B cell (primary cell): ENCODE measurements at regions of chr3 and their contacts with region 1.

Region 1: GRCh38 chr3:36957862-36958686 is 13.2 kb upstream of the TRANK1 start:
- DNase-seq: no peak
- ATAC-seq: no peak
- H3K4me3 ChIP-seq: no peak overlapping the region
- H3K4me3 Mint-ChIP-seq: no peak overlapping the region
- H3K27ac ChIP-seq: no peak overlapping the region
- H3K27ac Mint-ChIP-seq: peak overlapping the region; percentile 51
- H3K4me1 ChIP-seq: peaks cover 0 to 4% of the 10 kb centered on the region in 2 donors
- H3K4me1 Mint-ChIP-seq: peaks cover 13% of the 10 kb centered on the region
- H3K27me3 ChIP-seq: no peaks in the 10 kb centered on the region
- H3K27me3 Mint-ChIP-seq: no peaks in the 10 kb centered on the region
- CTCF ChIP-seq: no peak

Region 2: GRCh38 chr3:36700537-36701248 is 257.4 kb before region 1 on chr3:
- CTCF ChIA-PET with region 1: no interaction called
- POLR2A ChIA-PET with region 1: no interaction called
- intact Hi-C with region 1: no loop called
- DNase-seq: peak; percentile 44
- ATAC-seq: no peak
- H3K4me3 ChIP-seq: no peak overlapping the region
- H3K4me3 Mint-ChIP-seq: no peak overlapping the region
- H3K27ac ChIP-seq: no peak overlapping the region
- H3K27ac Mint-ChIP-seq: no peak overlapping the region
- H3K4me1 ChIP-seq: no peaks in the 10 kb centered on the region
- H3K4me1 Mint-ChIP-seq: no peaks in the 10 kb centered on the region
- H3K27me3 ChIP-seq: peaks cover 0 to 5% (median 0%) of the 10 kb centered on the region in 4 experiments
- H3K27me3 Mint-ChIP-seq: peaks cover 6% of the 10 kb centered on the region
- CTCF ChIP-seq: peak; percentile 63

Region 3: GRCh38 chr3:36837089-36837488 is 121.0 kb before region 1 on chr3:
- CTCF ChIA-PET with region 1: interaction called, 36 read pairs
- POLR2A ChIA-PET with region 1: no interaction called
- intact Hi-C with region 1: no loop called
- DNase-seq: no peak
- ATAC-seq: no peak
- H3K4me3 ChIP-seq: no peak overlapping the region
- H3K4me3 Mint-ChIP-seq: no peak overlapping the region
- H3K27ac ChIP-seq: no peak overlapping the region
- H3K27ac Mint-ChIP-seq: no peak overlapping the region
- H3K4me1 ChIP-seq: no peaks in the 10 kb centered on the region
- H3K4me1 Mint-ChIP-seq: no peaks in the 10 kb centered on the region
- H3K27me3 ChIP-seq: no peaks in the 10 kb centered on the region
- H3K27me3 Mint-ChIP-seq: no peaks in the 10 kb centered on the region
- CTCF ChIP-seq: no peak

Region 4: GRCh38 chr3:36876181-36876936 is 81.7 kb before region 1 on chr3:
- CTCF ChIA-PET with region 1: interaction called, 38 read pairs
- POLR2A ChIA-PET with region 1: no interaction called
- intact Hi-C with region 1: no loop called
- DNase-seq: peak; percentile 71
- ATAC-seq: peak; percentile 90
- H3K4me3 ChIP-seq: peak overlapping the region; percentile 4 to 58 (median 40)
- H3K4me3 Mint-ChIP-seq: peak overlapping the region; percentile 84
- H3K27ac ChIP-seq: peak overlapping the region; percentile 89 to 92
- H3K27ac Mint-ChIP-seq: peak overlapping the region; percentile 93
- H3K4me1 ChIP-seq: peaks cover 21 to 22% of the 10 kb centered on the region in 2 donors
- H3K4me1 Mint-ChIP-seq: peaks cover 47% of the 10 kb centered on the region
- H3K27me3 ChIP-seq: no peaks in the 10 kb centered on the region
- H3K27me3 Mint-ChIP-seq: no peaks in the 10 kb centered on the region
- CTCF ChIP-seq: no peak

Region 5: DNA sequence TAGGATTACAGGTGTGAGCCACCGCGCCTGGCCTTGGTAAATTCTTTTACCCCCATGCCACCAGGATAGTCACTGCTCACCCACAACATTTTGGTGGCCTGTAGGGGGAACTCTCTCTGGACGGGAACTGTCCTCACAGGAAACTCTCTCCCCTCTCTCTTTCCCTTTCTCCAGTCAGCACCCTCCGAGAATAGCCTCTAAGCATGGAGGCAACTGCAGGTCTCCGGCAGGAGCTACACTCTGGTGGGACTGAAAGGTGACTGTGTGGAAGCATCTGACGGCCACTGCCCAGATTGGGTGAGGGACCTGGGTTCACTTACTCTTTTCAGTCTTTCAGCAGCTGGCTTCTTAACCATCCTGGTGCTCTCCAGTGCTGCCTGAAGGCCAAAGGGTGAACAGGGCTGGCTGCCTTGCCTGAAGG is 34.5 kb before region 1 on chr3:
- CTCF ChIA-PET with region 1: interaction called, 12 read pairs
- POLR2A ChIA-PET with region 1: no interaction called
- intact Hi-C with region 1: loop called (anchors 5 kb)
- DNase-seq: peak; percentile 55
- ATAC-seq: no peak
- H3K4me3 ChIP-seq: peak overlapping the region in 3 of 5 experiments; percentile 1 to 24 (median 12)
- H3K4me3 Mint-ChIP-seq: peak overlapping the region; percentile 80
- H3K27ac ChIP-seq: peak overlapping the region; percentile 2 to 60
- H3K27ac Mint-ChIP-seq: peak overlapping the region; percentile 83
- H3K4me1 ChIP-seq: peaks cover 39 to 50% of the 10 kb centered on the region in 2 donors
- H3K4me1 Mint-ChIP-seq: peaks cover 49% of the 10 kb centered on the region
- H3K27me3 ChIP-seq: no peaks in the 10 kb centered on the region
- H3K27me3 Mint-ChIP-seq: no peaks in the 10 kb centered on the region
- CTCF ChIP-seq: no peak

Region 6: DNA sequence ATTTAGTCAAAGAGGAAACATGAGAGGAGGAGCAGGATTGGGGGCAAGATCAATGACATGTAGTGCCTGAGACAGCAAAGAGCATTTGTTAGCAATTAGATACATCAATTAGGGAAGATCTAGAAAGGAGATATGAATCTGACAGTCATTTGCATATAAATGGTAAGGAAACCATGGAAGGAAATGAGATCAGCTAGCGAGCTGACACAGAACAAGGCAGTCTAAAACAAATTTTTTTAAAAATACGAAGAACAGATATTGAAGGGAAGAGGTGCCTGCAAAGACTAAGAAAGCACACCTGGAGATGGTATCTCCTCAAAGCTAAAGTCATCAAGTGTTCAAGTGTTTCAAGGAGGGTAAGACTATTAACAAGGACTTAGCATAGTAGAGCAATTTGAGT is 30.3 kb after region 1 on chr3:
- CTCF ChIA-PET with region 1: interaction called, 25 read pairs
- POLR2A ChIA-PET with region 1: no interaction called
- intact Hi-C with region 1: loop called (anchors 5 kb)
- DNase-seq: peak; percentile 61
- ATAC-seq: no peak
- H3K4me3 ChIP-seq: peak overlapping the region in 4 of 5 experiments; percentile 9 to 48 (median 20)
- H3K4me3 Mint-ChIP-seq: peak overlapping the region; percentile 69
- H3K27ac ChIP-seq: peak overlapping the region; percentile 53 to 76
- H3K27ac Mint-ChIP-seq: peak overlapping the region; percentile 33
- H3K4me1 ChIP-seq: peaks cover 40 to 48% of the 10 kb centered on the region in 2 donors
- H3K4me1 Mint-ChIP-seq: peaks cover 44% of the 10 kb centered on the region
- H3K27me3 ChIP-seq: no peaks in the 10 kb centered on the region
- H3K27me3 Mint-ChIP-seq: no peaks in the 10 kb centered on the region
- CTCF ChIP-seq: no peak